ENCODE measurements at regions of chr2 and their contacts with region 1.

Region 1: GRCh38 chr2:197011799-197012641 is 85.5 kb upstream of the PGAP1 start:
- DNase-seq: peak; percentile 71
- H3K4me3 ChIP-seq: no peak overlapping the region
- H3K27ac ChIP-seq: no peak overlapping the region
- H3K4me1 ChIP-seq: peaks cover 5% of the 10 kb centered on the region
- CTCF ChIP-seq: peak; percentile 98

Region 2: GRCh38 chr2:197168705-197169104 is 156.7 kb after region 1 on chr2:
- CTCF ChIA-PET with region 1: interaction called, 3 read pairs
- POLR2A ChIA-PET with region 1: no interaction called
- intact Hi-C with region 1: loop called (anchors 1 kb)
- DNase-seq: peak; percentile 87
- H3K4me3 ChIP-seq: no peak overlapping the region
- H3K27ac ChIP-seq: peak overlapping the region; percentile 6
- H3K4me1 ChIP-seq: peaks cover 50% of the 10 kb centered on the region
- CTCF ChIP-seq: peak; percentile 97

Measured in OCI-LY7 (cell line).